Transverse colon (tissue), 4 donors: ENCODE measurements at regions of chr16 and their contacts with region 1.

Region 1: DNA sequence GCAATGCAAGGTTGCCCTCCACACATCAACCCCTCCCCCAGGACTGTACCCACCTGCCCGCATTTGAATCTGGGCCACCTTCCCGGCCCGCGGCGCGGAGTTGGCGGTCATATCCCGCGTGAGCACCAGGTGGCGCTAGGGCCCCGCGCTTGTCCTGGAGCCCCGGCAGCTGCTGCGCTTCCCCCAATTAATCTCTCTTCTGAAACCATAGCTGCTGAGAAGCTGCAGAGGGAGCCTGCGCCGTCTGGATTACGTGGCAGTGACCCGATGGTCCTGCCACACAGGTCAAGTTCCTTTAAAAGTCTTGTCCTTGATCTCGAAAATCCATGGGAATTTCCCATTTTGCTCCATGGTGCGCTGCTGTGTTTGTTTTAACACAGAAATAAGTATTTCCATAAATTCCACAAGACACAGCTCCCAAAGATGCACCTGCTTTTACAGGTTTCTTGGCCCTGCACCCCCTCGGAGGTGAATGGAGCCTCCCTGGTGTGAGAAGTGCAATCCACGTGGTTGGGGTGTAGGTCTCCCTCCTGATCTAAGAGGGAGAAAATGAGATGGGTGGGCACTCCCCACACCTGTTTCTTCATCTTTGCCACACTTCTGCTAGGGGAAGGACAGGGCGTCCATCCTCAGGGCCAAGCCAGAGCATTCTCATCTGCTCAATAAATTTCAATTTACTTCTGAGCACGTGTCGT is 22.1 kb downstream of the COX4I1 start:
- DNase-seq: peak; percentile 81
- H3K4me3 ChIP-seq: no peak overlapping the region
- H3K27ac ChIP-seq: peak overlapping the region in 2 of 4 donors; percentile 29 to 31
- H3K4me1 ChIP-seq: peaks cover 0 to 12% (median 4%) of the 10 kb centered on the region in 4 donors
- H3K27me3 ChIP-seq: peaks cover 6% of the 10 kb centered on the region
- CTCF ChIP-seq: peak; percentile 95 to 99 (median 98)
- EP300 ChIP-seq: no peak
- POLR2A ChIP-seq: no peak

Region 2: GRCh38 chr16:85986931-85987749 is 165.6 kb after region 1 on chr16:
- in situ Hi-C with region 1: loop called (anchors 5 to 10 kb)
- intact Hi-C with region 1: loop called (anchors 5 kb)
- DNase-seq: peak; percentile 50
- H3K4me3 ChIP-seq: peak overlapping the region in 1 of 4 donors; percentile 28
- H3K27ac ChIP-seq: peak overlapping the region; percentile 39 to 73 (median 66)
- H3K4me1 ChIP-seq: peaks cover 4 to 52% (median 25%) of the 10 kb centered on the region in 4 donors
- H3K27me3 ChIP-seq: peaks cover 6% of the 10 kb centered on the region
- CTCF ChIP-seq: peak; percentile 49 to 64 (median 62)
- EP300 ChIP-seq: no peak
- POLR2A ChIP-seq: peak; percentile 26

Region 3: DNA sequence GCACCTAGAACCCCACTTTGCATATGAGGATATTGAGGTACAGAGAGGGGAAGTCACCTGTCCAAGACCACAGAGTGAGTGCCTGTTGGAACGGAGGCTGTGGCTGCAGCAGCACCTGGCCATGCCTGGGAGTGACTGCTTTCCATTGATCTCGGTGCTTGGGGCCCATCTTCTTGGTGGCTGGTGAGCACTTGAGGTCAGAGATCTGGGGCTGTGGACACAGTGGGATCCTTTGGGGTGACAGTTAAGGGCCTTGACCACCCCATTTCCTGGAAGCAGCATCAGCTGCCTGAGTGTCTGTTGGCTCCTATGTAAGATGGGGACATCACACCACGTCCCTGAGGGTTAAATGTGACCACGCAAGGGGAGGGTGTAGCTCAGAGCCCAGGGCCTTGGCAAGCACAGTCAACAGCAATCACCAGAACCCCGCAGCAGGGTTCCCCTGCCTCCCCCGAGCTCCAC is 189.1 kb after region 1 on chr16:
- in situ Hi-C with region 1: loop called (anchors 5 to 10 kb)
- intact Hi-C with region 1: no loop called
- DNase-seq: no peak
- H3K4me3 ChIP-seq: no peak overlapping the region
- H3K27ac ChIP-seq: no peak overlapping the region
- H3K4me1 ChIP-seq: no peaks in the 10 kb centered on the region
- H3K27me3 ChIP-seq: no peaks in the 10 kb centered on the region
- CTCF ChIP-seq: no peak
- EP300 ChIP-seq: no peak
- POLR2A ChIP-seq: no peak

Region 4: DNA sequence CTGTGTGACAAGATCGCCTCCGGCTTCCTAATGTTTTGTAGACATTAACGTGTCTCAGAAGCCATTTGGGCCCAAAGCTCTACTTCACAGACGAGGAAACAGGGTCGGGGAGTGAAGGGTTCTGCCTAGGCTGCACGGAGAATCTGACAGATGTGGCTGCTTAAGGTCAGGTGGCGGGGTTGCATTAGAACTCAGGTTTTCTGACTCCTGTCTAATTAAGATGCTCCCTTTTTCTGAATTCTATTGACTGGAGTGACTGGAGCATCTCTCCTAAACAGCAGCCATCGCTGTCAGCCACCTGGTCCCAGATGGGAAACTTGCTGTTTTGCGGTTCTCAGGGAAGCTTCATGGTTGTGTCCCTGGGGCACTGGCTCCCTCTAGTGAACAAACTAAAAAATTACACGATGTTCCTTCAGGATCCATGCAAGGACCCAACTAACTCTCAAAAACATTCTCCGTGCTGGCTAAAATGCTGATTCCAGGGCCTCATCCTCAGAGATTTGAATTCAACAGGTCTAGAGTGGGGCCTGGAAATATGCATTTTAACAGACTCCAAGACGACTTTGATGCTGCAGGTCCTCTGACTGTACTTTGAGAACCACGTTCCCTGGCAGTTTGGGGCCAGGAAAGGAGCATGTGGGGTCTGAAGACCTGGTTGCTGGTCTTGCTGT is 194.7 kb after region 1 on chr16:
- in situ Hi-C with region 1: loop called (anchors 5 to 10 kb)
- intact Hi-C with region 1: loop called (anchors 2 kb)
- DNase-seq: peak; percentile 39
- H3K4me3 ChIP-seq: no peak overlapping the region
- H3K27ac ChIP-seq: no peak overlapping the region
- H3K4me1 ChIP-seq: peaks cover 0 to 12% (median 3%) of the 10 kb centered on the region in 4 donors
- H3K27me3 ChIP-seq: no peaks in the 10 kb centered on the region
- CTCF ChIP-seq: peak; percentile 80 to 84 (median 81)
- EP300 ChIP-seq: no peak
- POLR2A ChIP-seq: no peak